Ascending aorta (tissue), 2 donors: ENCODE measurements at regions of chr5 and their contacts with region 1.

Region 1: GRCh38 chr5:78964887-78965286 is 20.2 kb downstream of the ARSB start:
- DNase-seq: no peak
- H3K4me3 ChIP-seq: no peak overlapping the region
- H3K27ac ChIP-seq: no peak overlapping the region
- H3K4me1 ChIP-seq: no peaks in the 10 kb centered on the region
- H3K27me3 ChIP-seq: no peaks in the 10 kb centered on the region
- CTCF ChIP-seq: peak; percentile 35 to 50 (median 36)

Region 2: GRCh38 chr5:78320401-78320800 is 644.5 kb before region 1 on chr5:
- intact Hi-C with region 1: loop called (anchors 10 kb)
- DNase-seq: no peak
- H3K4me3 ChIP-seq: no peak overlapping the region
- H3K27ac ChIP-seq: no peak overlapping the region
- H3K4me1 ChIP-seq: no peaks in the 10 kb centered on the region
- H3K27me3 ChIP-seq: no peaks in the 10 kb centered on the region
- CTCF ChIP-seq: peak; percentile 10 to 40 (median 10)

Region 3: GRCh38 chr5:78467752-78468357 is 497.0 kb before region 1 on chr5:
- intact Hi-C with region 1: loop called (anchors 5 kb)
- DNase-seq: no peak
- H3K4me3 ChIP-seq: no peak overlapping the region
- H3K27ac ChIP-seq: no peak overlapping the region
- H3K4me1 ChIP-seq: no peaks in the 10 kb centered on the region
- H3K27me3 ChIP-seq: no peaks in the 10 kb centered on the region
- CTCF ChIP-seq: peak; percentile 73 to 85 (median 84)

Region 4: DNA sequence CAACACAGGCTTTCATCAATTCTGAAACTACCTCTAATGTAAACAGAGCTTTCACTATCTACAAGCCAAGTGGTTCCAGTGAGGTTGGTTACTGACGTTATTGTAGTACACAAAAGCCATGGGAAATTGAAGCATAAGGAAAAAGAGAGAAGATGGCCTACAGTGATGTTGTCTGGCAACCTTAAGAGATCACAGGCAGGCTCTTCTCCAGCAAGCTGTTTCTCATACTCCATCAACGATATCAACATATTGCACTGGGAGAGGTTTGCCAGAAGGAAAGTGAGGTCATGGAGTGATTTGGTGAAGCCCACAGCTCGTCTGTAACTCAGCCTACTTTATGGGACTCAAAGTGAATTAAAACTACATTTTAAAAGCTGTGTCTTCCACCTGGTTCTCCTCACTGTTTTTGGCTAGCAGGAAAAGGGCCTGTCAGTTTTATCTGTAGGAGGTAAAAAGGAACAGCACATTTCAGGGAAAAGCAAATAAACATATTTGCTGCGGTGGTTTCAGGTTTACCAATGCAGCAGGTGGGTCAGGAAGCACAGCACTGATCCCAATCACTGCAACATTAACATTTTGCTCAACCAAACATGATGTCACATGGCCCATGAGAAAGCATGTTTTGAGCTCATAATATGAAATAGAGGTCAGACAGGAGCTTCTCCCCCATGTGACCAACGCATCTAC is 52.7 kb before region 1 on chr5:
- intact Hi-C with region 1: no loop called
- DNase-seq: no peak
- H3K4me3 ChIP-seq: no peak overlapping the region
- H3K27ac ChIP-seq: no peak overlapping the region
- H3K4me1 ChIP-seq: peaks cover 0 to 12% of the 10 kb centered on the region in 2 donors
- H3K27me3 ChIP-seq: no peaks in the 10 kb centered on the region
- CTCF ChIP-seq: no peak